Activated T-helper 1 cell treated with anti-CD3 and anti-CD28 coated beads, Interleukin-12 subunit alpha, Interleukin-12 subunit beta, Interleukin-2, Interleukin-4 antibody, amounts not matched to agents 30 ng/mL and 10 ng/mL and 1 ng/mL, durations not matched to agents 14 hours and 24 hours and 36 hours (primary cell): ENCODE measurements at regions of chr16 and their contacts with region 1.

Region 1: DNA sequence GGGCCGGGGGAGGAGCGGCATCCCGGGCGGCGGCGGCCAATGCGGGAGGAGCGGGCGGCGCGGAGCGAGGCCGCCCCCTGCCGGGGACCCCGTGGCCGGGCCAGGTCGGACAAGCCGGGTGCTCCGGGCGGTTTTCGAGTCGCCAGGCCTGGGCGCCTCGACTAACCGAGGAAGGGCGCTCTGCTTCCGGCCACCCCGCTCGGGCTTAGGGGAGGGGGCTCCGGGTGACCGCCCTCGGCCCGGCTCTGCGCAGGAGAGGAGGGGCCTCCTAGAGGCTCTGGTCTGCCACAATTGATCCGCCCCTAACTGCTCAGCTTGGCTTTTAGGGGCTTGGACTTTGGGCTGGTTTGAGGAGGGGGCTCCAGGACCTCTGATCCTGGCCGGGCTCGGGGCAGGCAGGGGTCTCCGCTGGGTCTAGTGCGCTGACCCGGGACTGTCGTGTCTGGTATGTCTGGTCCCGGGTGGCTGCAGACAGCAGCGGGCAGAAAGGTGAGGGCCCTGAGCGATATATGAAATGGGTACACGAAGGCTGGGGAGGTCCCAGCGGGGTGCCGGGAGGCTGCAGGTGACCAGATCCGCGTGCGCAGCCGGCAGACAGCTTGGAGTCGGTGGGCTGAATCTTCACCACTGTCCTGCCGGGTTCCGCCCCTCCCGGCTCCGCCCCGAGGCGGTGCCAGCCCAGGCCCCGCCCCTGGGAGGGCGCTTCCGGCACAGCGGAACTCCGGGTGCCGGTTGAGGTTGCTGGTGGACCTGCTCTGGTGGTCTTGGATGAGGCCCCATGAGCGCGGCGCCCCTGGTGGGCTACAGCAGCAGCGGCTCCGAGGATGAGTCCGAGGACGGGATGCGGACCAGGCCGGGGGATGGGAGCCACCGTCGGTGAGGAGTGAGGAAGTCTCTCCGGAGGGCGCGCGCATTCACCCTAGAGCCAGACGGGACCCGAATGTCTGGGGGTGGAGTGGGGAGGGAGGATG is at the start of gene USB1:
- DNase-seq: peak; percentile 83
- H3K4me3 Mint-ChIP-seq: peak within 1 kb of the TSS; percentile 91
- H3K27ac Mint-ChIP-seq: peak within 1 kb of the TSS; percentile 91
- H3K4me1 Mint-ChIP-seq: peaks cover 45% of the 10 kb centered on the region
- H3K27me3 Mint-ChIP-seq: no peaks in the 10 kb centered on the region
- total RNA-seq, gene USB1: 60.8 and 63.0 TPM in 2 replicates

Region 2: GRCh38 chr16:57462209-57462977 is 538.6 kb before region 1 on chr16 and contains the start of gene POLR2C:
- intact Hi-C with region 1: loop called (anchors 5 kb)
- DNase-seq: peak; percentile 89
- H3K4me3 Mint-ChIP-seq: peak within 1 kb of the TSS; percentile 100
- H3K27ac Mint-ChIP-seq: peak within 1 kb of the TSS; percentile 99
- H3K4me1 Mint-ChIP-seq: peaks cover 43% of the 10 kb centered on the region
- H3K27me3 Mint-ChIP-seq: no peaks in the 10 kb centered on the region
- total RNA-seq, gene POLR2C: 89.2 and 90.9 TPM in 2 replicates

Region 3: DNA sequence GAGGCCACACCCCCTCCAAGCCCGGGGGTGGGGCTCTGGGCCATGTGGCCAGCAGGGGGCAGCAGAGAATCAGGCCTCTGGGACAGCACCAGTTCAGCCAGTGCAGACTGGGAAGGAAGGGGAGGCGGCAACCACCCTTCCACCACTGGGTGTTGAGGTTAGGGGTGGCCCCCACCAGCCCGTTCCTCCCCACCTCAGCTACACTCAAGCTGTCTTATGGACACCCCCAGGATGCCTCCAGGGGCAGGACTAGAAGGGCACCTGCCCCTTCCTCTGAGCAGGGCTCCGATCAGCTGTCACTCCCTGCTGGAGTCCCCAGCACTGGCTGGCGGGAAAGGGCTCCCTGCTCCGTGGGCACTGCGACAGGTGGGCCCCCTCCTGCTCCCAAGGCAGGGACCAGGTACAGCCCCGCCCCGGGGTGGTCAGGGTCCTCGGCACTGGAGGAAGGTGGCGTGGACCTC is 243.6 kb before region 1 on chr16:
- intact Hi-C with region 1: loop called (anchors 1 kb)
- DNase-seq: peak; percentile 81
- H3K4me3 Mint-ChIP-seq: no peak overlapping the region
- H3K27ac Mint-ChIP-seq: no peak overlapping the region
- H3K4me1 Mint-ChIP-seq: no peaks in the 10 kb centered on the region
- H3K27me3 Mint-ChIP-seq: no peaks in the 10 kb centered on the region

Region 4: GRCh38 chr16:57899771-57900661 is 101.0 kb before region 1 on chr16:
- intact Hi-C with region 1: loop called (anchors 1 kb)
- DNase-seq: peak; percentile 61
- H3K4me3 Mint-ChIP-seq: no peak overlapping the region
- H3K27ac Mint-ChIP-seq: no peak overlapping the region
- H3K4me1 Mint-ChIP-seq: peaks cover 2% of the 10 kb centered on the region
- H3K27me3 Mint-ChIP-seq: peaks cover 9% of the 10 kb centered on the region

Region 5: GRCh38 chr16:57966133-57966805 is 34.7 kb before region 1 on chr16:
- intact Hi-C with region 1: no loop called
- DNase-seq: no peak
- H3K4me3 Mint-ChIP-seq: no peak overlapping the region
- H3K27ac Mint-ChIP-seq: no peak overlapping the region
- H3K4me1 Mint-ChIP-seq: no peaks in the 10 kb centered on the region
- H3K27me3 Mint-ChIP-seq: peaks cover 4% of the 10 kb centered on the region

Region 6: DNA sequence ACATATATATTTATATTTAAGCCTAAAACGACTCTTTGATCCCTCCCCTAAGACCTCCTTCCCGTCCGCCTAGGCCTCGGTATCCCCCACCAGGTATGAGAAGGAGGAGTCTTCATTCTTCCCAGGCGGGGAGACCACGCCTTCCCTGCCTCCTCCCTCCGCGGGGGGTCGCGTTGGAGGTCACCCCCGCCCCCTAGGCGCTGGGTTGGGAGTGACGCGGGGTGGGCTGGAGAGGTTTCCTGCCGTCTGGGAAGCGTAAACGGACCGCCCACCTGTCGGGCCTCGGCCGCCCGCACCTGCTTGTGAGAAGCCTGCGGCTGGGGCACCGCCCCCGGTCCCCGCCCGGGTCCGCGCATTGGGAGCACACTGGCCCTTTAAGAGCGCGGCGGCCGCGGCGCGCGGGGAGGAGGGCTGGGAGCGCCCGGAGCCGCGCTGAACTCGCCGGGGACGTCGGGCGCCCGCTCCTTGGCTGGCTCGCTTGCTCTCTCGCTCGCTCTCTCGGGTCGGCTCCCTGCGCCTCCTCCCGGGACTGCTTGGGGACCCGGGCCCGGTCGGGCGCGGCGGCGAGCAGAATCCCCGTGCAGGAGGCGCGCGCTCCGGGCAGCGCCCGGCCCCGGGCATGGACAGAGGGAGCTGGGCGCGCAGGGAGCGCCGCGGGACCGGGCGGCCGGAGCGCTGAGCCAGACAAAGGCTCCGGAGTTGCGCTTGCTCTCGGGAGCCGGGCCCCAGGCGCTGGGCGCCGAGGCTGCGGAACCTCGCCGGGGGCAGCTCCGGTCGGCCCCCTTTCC is 24.6 kb after region 1 on chr16 and contains the start of gene MMP15:
- intact Hi-C with region 1: loop called (anchors 1 kb)
- DNase-seq: peak; percentile 51
- H3K4me3 Mint-ChIP-seq: peak within 1 kb of the TSS; percentile 89
- H3K27ac Mint-ChIP-seq: peak within 1 kb of the TSS; percentile 77
- H3K4me1 Mint-ChIP-seq: peaks cover 13% of the 10 kb centered on the region
- H3K27me3 Mint-ChIP-seq: peaks cover 28% of the 10 kb centered on the region
- total RNA-seq, gene MMP15: 1.1 and 1.3 TPM in 2 replicates

Region 7: DNA sequence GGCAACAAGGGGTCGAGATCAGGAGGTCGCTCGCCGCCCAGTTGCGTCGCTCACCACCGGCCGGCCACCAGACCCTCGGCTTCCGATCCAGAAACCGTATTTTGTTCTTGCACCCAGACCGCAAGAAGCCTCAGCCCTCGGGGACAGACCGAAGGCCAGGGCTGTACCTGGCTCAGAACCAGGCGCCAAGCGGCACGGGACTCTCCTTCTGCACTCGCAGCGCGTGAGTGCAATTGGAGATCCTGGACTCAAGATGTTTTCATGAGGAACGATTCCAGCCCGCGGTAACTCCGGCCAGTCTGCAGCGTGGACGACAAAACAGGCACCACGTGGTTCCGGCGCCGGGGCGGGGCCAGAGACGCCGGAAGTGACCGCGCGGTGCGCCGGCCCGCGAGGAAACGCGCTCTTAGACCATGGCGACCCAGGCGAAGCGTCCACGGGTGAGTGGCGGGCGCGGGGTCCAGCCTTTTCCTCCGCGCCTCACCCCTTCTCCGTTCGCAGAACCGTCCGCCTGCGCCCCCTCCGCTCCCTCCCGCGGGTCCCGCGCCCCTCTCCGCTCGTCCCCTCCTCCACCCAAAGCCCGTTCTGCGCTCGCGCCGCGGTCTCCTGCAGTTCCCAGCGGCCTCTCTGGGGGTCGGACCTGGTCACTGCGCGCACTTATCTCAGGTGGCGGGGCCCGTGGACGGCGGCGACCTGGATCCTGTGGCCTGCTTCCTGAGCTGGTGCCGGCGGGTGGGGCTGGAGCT is 514.3 kb after region 1 on chr16 and contains the start of gene SETD6:
- intact Hi-C with region 1: loop called (anchors 10 kb)
- DNase-seq: peak; percentile 77
- H3K4me3 Mint-ChIP-seq: peak within 1 kb of the TSS; percentile 92
- H3K27ac Mint-ChIP-seq: peak within 1 kb of the TSS; percentile 83
- H3K4me1 Mint-ChIP-seq: peaks cover 36% of the 10 kb centered on the region
- H3K27me3 Mint-ChIP-seq: no peaks in the 10 kb centered on the region
- total RNA-seq, gene SETD6: 32.1 and 34.9 TPM in 2 replicates